ENCODE measurements at regions of chr12 and their contacts with region 1.

Region 1: DNA sequence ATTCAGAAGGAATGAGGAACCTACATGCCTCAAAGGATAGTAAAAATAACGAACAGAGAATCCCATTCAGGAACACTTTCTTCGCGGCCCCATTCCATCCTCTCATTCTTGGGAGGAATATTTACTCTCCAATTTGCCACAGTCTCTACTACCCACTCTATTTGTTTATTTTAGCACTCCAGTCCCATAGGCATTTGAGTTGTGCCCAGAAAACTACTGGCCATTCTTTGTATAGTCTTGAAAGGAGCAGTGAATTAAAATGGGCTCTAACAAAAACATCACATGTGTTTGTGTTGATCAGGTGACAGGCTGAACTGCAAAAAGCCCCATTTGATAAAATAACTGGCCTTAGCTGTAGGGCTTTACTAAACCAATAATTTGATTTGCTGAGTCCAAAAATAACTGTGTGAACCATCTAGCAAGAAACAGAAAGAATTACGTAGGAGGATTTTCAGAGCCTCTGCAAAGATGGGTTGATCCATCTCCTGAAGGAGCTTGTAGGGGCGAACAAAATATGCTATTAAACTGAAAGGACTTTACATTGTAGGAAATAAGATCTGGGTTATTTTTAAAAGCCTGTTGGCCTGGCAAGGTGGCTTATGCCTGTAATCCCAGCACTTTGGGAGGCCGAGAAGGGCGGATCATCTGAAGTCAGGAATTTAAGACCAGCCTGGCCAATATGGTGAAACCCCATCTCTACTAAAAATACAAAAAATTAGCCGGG is 142.3 kb upstream of the CPNE8 start:
- DNase-seq: no peak
- H3K4me3 ChIP-seq: no peak overlapping the region
- H3K27ac ChIP-seq: no peak overlapping the region
- H3K4me1 ChIP-seq: no peaks in the 10 kb centered on the region
- H3K27me3 ChIP-seq: no peaks in the 10 kb centered on the region
- CTCF ChIP-seq: no peak
- POLR2A ChIP-seq: no peak

Region 2: GRCh38 chr12:39319187-39319586 is 271.5 kb after region 1 on chr12:
- intact Hi-C with region 1: loop called (anchors 10 kb)
- DNase-seq: no peak
- H3K4me3 ChIP-seq: no peak overlapping the region
- H3K27ac ChIP-seq: no peak overlapping the region
- H3K4me1 ChIP-seq: no peaks in the 10 kb centered on the region
- H3K27me3 ChIP-seq: no peaks in the 10 kb centered on the region
- CTCF ChIP-seq: no peak
- POLR2A ChIP-seq: no peak

Region 3: DNA sequence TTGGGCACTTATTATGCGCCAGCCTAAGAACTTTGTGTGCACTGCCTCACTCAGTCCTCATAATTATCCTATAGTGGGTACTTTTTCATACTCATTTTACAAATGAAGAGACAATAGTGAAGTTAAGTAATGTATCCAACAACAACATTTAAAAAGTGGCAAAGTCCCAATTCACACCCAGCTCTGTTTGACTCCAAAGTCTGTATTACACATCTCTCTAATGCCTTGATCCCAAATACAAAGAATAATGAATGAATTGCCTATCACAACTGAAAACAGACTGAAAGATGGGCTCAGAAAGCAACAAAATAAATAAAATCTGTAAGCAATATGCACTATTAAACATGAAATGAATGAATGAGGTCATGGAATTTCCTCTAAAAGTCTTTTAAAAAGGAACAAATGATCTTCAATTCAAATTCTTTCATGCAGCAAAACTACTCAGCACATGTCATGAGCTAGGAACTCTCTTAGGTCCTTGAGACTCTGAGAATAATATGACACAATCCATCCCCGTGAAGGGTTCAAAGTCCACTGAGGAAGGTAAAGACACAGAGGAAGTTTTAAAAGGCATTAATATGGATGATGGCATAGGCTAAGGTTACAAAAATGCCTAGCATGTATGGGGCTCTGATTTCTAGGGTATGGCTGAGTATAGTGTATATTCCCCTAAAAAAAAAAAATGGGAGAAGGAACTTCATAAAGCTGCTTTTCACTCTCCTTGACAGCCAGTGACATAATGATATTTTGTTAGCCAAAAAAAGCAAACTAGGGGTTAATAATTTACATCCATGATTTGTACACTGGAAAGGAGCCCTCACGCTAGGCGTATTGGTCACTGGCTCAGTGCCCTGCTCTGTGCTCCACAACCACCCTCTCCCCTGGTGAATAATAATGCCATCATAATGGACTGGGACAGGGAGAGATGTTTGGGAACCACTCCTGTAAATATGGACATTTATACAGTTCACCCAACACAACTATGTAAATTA is 954.8 kb after region 1 on chr12:
- intact Hi-C with region 1: loop called (anchors 10 kb)
- DNase-seq: no peak
- H3K4me3 ChIP-seq: no peak overlapping the region
- H3K27ac ChIP-seq: no peak overlapping the region
- H3K4me1 ChIP-seq: no peaks in the 10 kb centered on the region
- H3K27me3 ChIP-seq: no peaks in the 10 kb centered on the region
- CTCF ChIP-seq: no peak
- POLR2A ChIP-seq: no peak